Gastrocnemius medialis (tissue), 4 donors: ENCODE measurements at regions of chr9 and their contacts with region 1.

Region 1: DNA sequence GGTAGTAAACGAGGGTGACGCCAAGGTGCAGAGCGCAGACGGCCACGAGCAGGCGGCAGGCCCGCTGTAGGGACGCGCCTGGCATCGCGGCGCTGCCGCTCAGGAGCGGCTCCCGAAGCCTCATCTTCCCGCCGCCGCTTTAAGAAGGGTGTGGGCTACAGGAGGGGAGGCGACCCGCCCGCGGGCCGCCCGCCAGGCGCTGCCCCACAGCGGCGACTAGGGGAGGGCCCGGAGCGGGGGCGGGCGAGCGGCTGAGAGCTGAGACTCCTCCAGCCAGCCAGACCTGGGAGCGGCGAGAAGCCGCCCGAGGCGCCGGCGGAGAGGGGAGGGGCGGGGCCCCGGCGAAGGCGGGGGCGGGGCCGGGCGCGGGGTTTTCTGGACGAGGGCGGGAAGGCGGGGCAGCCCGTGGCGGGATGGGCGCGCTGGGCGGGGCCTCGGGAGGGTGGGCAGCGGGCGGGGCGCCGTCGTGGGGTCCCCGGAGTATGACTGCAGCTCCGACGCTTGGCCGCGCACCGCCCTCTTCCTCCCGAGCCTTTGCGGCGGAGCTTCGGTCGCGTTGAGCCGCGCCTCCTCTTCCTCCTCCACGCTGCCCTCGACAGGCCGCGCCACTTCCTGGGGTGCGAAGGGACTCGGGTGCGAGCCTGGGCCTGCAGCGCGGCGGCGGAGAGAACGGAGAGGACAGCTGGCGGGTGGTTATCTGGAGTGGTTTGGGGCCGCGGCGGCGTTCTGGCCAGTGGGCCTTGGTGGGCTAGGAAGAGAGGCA is at the start of gene B4GALT1:
- DNase-seq: peak; percentile 83 to 93
- ATAC-seq: peak; percentile 37 to 56
- H3K4me3 ChIP-seq: peak within 1 kb of the TSS; percentile 77 to 97 (median 90)
- H3K27ac ChIP-seq: peak within 1 kb of the TSS; percentile 96 to 99 (median 99)
- H3K4me1 ChIP-seq: peaks cover 44 to 46% of the 10 kb centered on the region in 2 donors
- H3K27me3 ChIP-seq: no peaks in the 10 kb centered on the region
- CTCF ChIP-seq: peak in 1 of 5 experiments; percentile 16
- POLR2A ChIP-seq: peak; percentile 93 to 94
- total RNA-seq, gene B4GALT1: 24.2 to 56.2 (median 42.7) TPM

Region 2: DNA sequence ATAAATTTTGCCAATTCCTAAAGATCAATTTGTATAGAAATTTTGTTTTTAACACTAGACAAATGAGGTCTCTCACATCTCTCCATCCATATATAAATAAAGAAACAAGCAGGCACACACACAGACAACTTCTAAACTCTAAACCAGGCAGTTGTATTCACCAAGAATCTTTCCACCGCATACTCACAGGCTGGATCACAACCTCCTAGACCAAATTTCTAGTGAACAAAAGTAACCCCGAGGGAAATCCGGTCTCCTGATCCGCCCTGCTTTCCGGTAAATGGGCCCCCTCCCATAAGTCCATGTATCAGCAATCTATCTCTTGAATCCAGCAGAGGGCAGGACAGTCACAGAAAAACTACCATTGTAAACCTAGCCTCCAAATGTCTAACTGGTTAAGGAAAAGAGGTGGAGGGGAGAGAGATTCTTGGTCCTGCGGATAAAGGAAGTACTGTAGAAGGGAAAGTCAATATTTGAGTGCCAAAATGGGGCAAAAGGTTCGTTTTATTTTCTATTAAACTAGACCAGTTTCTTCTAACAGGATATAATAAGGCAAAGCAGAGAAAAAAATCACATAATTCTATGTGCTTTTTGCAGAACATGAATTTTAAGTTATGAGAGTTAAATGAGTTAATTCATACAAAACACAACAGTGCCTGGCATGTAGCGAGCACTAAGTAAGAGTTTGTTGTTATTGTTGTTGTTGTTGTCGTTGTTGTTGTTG is 85.9 kb before region 1 on chr9:
- in situ Hi-C with region 1: loop called in 3 of 4 experiments (anchors 5 kb)
- intact Hi-C with region 1: loop called (anchors 1 kb)
- DNase-seq: peak; percentile 31 to 42
- ATAC-seq: peak; percentile 80 to 88
- H3K4me3 ChIP-seq: peak overlapping the region in 1 of 4 donors; percentile 14
- H3K27ac ChIP-seq: peak overlapping the region in 3 of 4 donors; percentile 30 to 52 (median 39)
- H3K4me1 ChIP-seq: peaks cover 5 to 9% of the 10 kb centered on the region in 2 donors
- H3K27me3 ChIP-seq: no peaks in the 10 kb centered on the region
- CTCF ChIP-seq: peak; percentile 80 to 86 (median 84)
- POLR2A ChIP-seq: no peak

Region 3: DNA sequence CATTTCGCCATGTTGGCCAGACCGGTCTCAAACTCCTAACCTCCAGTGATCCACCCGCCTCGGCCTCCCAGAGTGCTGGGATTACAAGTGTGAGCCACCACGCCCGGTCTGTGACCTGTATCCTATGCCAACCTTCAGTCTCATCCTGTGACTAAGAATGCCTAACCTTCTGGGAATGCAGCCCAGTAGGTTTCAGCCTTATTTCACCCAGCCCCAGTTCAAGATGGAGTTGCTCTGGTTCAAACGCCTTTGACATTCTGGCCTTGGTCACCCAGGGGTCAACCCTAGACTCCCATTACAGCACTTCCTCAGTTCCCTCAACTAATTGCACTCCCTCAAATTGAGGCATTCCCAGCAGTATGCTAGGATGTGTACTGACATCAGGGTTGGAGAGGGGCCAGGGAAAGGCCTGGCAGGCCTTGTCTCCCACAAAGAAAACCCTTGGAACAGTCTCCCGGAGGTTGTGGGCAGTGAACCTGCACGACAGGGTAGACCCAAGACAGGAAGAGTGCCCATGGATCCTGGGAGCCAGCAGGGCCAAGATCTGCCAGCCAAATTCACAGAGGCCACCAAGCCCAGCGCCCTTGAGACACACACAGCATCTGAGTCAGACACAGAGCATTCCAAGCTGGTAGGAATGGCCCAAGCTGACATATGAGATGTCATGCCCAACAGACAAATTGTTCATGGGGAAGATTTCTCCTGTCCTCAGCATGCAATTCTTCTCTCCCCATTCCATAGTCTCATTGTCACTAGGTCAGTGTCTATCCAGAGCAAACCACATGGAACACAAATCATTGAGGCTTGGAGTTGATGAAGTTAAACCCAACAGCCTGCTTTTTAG is 65.9 kb before region 1 on chr9:
- in situ Hi-C with region 1: no loop called
- intact Hi-C with region 1: loop called (anchors 1 kb)
- DNase-seq: peak; percentile 66 to 88
- ATAC-seq: peak; percentile 97
- H3K4me3 ChIP-seq: no peak overlapping the region
- H3K27ac ChIP-seq: peak overlapping the region; percentile 80 to 88 (median 85)
- H3K4me1 ChIP-seq: peaks cover 14 to 19% of the 10 kb centered on the region in 2 donors
- H3K27me3 ChIP-seq: no peaks in the 10 kb centered on the region
- CTCF ChIP-seq: no peak
- POLR2A ChIP-seq: no peak

Region 4: DNA sequence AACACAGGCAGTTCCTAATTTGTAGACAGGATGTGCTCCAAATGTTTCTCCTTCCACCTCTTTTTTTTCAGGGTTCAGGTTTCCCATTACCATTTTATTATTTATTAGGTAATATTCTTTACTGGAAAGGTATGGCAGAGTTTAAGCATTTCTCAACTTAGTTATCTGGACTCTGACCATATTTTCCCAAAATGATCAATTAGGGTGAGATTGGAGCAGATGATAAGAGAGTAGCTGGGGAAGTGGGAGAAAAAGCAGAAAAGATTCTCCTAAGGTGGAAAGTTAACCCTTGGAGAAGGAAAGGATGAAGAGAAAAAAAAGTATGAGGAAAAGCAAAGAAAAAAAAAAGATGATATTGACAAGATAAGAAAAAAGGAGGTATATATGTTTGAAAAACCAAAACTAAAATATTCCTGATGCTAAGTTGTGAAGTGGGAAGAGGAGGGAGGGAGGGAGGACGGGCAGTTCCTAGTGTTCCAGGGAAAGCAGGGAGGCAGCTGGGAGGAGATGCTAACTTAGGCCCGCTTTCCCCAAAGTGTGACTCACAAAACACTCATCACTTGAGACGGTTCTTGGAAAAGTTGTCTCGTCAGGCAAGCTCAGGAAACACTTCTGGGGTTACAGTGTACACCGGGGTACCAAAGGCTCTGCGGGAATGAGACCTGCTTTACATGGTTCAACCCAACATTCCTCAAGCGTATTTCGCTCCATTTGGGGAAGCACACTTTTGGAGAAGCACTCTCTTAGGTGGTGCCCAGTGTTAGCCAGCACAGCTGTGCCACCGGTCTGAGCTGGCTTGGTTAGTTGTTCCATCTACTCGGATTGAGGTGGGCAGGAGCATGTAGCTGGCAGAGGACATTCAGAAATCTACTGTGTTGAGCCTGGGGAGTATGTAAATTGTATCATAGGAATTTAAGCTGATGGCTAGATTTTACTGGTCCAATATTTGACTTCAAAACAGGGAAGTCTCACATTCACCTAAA is 35.1 kb before region 1 on chr9:
- in situ Hi-C with region 1: no loop called
- intact Hi-C with region 1: loop called (anchors 2 kb)
- DNase-seq: peak in 1 of 2 donors; percentile 34
- ATAC-seq: no peak
- H3K4me3 ChIP-seq: no peak overlapping the region
- H3K27ac ChIP-seq: peak overlapping the region in 2 of 4 donors; percentile 43 to 58
- H3K4me1 ChIP-seq: peaks cover 30 to 64% of the 10 kb centered on the region in 2 donors
- H3K27me3 ChIP-seq: no peaks in the 10 kb centered on the region
- CTCF ChIP-seq: no peak
- POLR2A ChIP-seq: no peak

Region 5: GRCh38 chr9:33225319-33226149 is 58.3 kb after region 1 on chr9:
- in situ Hi-C with region 1: loop called in 1 of 4 experiments (anchors 10 kb)
- intact Hi-C with region 1: loop called (anchors 2 kb)
- DNase-seq: peak; percentile 23 to 50
- ATAC-seq: peak; percentile 77 to 82
- H3K4me3 ChIP-seq: no peak overlapping the region
- H3K27ac ChIP-seq: no peak overlapping the region
- H3K4me1 ChIP-seq: peaks cover 4 to 7% of the 10 kb centered on the region in 2 donors
- H3K27me3 ChIP-seq: no peaks in the 10 kb centered on the region
- CTCF ChIP-seq: peak; percentile 79 to 88 (median 82)
- POLR2A ChIP-seq: no peak

Region 6: DNA sequence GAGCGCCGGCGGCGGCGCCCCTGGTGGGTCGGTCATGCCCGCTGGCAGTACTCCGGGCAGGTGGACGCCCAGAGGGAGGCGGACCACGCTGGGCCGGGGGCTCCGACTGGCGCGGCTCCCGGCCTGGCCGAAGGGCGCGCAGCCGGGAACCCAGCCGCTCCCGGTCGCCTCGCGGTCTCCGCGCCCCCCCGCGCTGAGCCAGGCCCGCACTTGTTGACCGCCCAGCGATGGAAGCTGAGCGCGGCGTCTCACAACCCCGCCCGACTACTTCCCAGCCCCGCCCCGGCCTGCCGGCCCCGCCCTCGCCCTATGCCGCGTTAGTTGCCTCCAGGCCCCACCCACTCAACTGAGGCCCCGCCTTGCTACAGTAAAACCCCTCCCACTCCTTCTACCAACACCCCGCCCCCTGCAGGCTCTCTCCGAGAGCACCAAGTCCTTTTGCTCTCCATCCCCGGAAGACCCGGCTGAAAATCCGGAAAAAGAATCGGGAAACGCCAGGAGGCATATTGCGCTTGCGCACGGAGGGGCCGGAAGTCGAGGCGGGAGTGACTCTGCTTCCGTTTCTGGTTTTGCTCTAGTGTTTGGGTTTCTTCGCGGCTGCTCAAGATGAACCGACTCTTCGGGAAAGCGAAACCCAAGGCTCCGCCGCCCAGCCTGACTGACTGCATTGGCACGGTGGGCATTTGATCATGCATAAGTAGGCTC is 97.4 kb after region 1 on chr9 and contains the starts of genes BAG1 and CHMP5:
- in situ Hi-C with region 1: no loop called
- intact Hi-C with region 1: no loop called
- DNase-seq: peak; percentile 99 to 100
- ATAC-seq: peak; percentile 88 to 91
- H3K4me3 ChIP-seq: peak within 1 kb of the TSS; percentile 86 to 100 (median 90)
- H3K27ac ChIP-seq: peak within 1 kb of the TSS; percentile 96 to 100 (median 98)
- H3K4me1 ChIP-seq: peaks cover 17 to 20% of the 10 kb centered on the region in 2 donors
- H3K27me3 ChIP-seq: no peaks in the 10 kb centered on the region
- CTCF ChIP-seq: peak in 3 of 5 experiments; percentile 21 to 51 (median 48)
- POLR2A ChIP-seq: peak; percentile 98 to 99
- total RNA-seq, gene BAG1: 81.5 to 244 (median 158) TPM
- total RNA-seq, gene CHMP5: 42.8 to 50.7 (median 47.8) TPM

Region 7: DNA sequence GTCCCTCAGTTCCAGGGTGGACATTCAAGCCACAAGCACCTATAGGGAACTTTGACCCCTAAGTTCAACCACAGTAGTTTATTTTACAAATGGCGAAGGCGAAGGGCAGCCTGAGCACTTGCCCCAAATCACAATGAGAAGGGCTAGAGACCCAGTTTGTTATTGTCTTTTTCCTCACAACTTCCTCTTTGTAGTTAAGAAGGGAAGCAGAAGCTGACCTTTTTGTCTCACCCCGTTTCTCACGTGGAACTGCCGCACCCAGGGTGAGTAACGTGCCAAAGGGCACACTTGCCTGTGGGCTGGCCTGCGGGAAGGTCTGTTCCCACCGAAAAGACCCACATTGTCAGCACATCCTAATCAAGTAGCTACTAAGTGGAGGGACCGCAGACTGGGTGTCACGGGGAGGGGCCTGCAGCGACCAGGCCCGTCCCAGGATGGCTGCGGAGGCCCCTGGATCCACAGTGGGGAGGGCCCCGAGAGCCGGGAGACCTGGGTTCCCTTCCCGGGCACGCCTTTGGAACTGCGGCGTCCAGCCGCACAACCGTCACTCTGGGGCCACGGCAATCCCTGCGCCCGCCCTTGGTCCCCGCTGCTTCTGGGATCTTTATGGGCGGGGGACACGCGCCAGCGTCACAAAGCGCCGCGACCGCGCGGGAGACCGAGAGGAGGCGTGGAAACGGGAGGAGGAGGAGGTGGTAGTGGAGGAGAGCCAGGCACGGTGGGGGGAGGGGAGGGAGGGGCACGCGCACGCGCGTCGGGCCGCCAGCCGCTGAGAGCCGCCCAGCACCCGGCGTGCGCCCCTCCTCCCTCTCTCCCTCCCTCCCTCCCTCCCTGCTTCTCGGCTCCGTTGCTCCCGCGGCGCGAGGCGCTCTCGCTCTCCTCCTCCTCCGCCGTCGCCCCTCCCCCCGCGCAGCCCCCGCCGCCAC is 649.4 kb after region 1 on chr9 and contains the start of gene UBE2R2:
- in situ Hi-C with region 1: no loop called
- intact Hi-C with region 1: loop called (anchors 2 kb)
- DNase-seq: peak; percentile 87 to 91
- ATAC-seq: peak; percentile 65 to 76
- H3K4me3 ChIP-seq: peak within 1 kb of the TSS; percentile 80 to 94 (median 90)
- H3K27ac ChIP-seq: peak within 1 kb of the TSS; percentile 92 to 100 (median 98)
- H3K4me1 ChIP-seq: peaks cover 45 to 52% of the 10 kb centered on the region in 2 donors
- H3K27me3 ChIP-seq: no peaks in the 10 kb centered on the region
- CTCF ChIP-seq: no peak
- POLR2A ChIP-seq: peak; percentile 75 to 79
- total RNA-seq, gene UBE2R2: 32.5 to 47.3 (median 41.9) TPM